ENCODE measurements at regions of chr7 and their contacts with region 1.

Region 1: GRCh38 chr7:154953006-154953684 is 49.8 kb downstream of the PAXIP1 start:
- DNase-seq: peak in 4 of 5 donors; percentile 44 to 71 (median 48)
- ATAC-seq: no peak
- H3K4me3 ChIP-seq: no peak overlapping the region
- H3K27ac ChIP-seq: no peak overlapping the region
- H3K4me1 ChIP-seq: no peaks in the 10 kb centered on the region
- H3K27me3 ChIP-seq: no peaks in the 10 kb centered on the region
- CTCF ChIP-seq: peak; percentile 36 to 65 (median 54)
- POLR2A ChIP-seq: no peak

Region 2: GRCh38 chr7:154789404-154789803 is 163.7 kb before region 1 on chr7:
- intact Hi-C with region 1: no loop called
- DNase-seq: no peak
- ATAC-seq: no peak
- H3K4me3 ChIP-seq: no peak overlapping the region
- H3K27ac ChIP-seq: no peak overlapping the region
- H3K4me1 ChIP-seq: peaks cover 0 to 6% (median 0%) of the 10 kb centered on the region in 12 donors
- H3K27me3 ChIP-seq: peaks cover 0 to 27% (median 8%) of the 10 kb centered on the region in 9 donors
- CTCF ChIP-seq: peak in 5 of 12 donors; percentile 21 to 32 (median 30)
- POLR2A ChIP-seq: no peak

Region 3: DNA sequence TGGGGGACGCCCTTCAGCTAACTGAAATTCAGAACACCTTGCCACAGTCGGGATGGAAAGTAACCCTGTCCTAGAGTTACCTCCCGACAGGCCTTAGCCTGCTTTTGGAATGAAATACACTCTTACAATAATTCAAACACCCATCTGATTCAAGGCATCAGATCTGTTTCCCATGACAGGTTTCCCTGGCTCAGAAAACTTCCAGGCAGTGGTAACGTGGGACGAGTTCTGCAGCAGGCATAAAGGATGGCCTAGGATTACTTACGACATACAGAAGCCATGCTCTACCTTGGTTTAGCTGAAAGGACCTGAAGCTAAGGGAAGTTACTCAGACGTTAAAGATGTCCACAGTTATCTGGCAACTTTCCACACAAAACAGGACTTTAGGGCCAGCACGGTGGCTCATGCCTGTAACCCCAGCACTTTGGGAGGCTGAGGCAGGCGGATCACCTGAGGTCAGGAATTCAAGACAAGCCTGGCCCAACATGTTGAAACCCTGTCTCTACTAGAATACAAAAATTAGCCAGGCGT is 44.8 kb after region 1 on chr7:
- intact Hi-C with region 1: loop called in 1 of 10 experiments (anchors 2 kb)
- DNase-seq: no peak
- ATAC-seq: no peak
- H3K4me3 ChIP-seq: no peak overlapping the region
- H3K27ac ChIP-seq: no peak overlapping the region
- H3K4me1 ChIP-seq: peaks cover 0 to 16% (median 7%) of the 10 kb centered on the region in 12 donors
- H3K27me3 ChIP-seq: no peaks in the 10 kb centered on the region
- CTCF ChIP-seq: no peak
- POLR2A ChIP-seq: no peak